Dendritic cell treated with granulocyte-macrophage colony-stimulating factor and Interleukin-4, amounts not matched to agents 40 ng/mL and 50 ng/mL, for 4 days (primary cell): ENCODE measurements at regions of chr6 and their contacts with region 1.

Region 1: GRCh38 chr6:37169496-37170272 is at the start of gene PIM1:
- H3K4me3 Mint-ChIP-seq: peak within 1 kb of the TSS; percentile 84
- H3K27ac Mint-ChIP-seq: peak within 1 kb of the TSS; percentile 94
- H3K4me1 Mint-ChIP-seq: peaks cover 47% of the 10 kb centered on the region
- H3K27me3 Mint-ChIP-seq: peaks cover 6% of the 10 kb centered on the region

Region 2: DNA sequence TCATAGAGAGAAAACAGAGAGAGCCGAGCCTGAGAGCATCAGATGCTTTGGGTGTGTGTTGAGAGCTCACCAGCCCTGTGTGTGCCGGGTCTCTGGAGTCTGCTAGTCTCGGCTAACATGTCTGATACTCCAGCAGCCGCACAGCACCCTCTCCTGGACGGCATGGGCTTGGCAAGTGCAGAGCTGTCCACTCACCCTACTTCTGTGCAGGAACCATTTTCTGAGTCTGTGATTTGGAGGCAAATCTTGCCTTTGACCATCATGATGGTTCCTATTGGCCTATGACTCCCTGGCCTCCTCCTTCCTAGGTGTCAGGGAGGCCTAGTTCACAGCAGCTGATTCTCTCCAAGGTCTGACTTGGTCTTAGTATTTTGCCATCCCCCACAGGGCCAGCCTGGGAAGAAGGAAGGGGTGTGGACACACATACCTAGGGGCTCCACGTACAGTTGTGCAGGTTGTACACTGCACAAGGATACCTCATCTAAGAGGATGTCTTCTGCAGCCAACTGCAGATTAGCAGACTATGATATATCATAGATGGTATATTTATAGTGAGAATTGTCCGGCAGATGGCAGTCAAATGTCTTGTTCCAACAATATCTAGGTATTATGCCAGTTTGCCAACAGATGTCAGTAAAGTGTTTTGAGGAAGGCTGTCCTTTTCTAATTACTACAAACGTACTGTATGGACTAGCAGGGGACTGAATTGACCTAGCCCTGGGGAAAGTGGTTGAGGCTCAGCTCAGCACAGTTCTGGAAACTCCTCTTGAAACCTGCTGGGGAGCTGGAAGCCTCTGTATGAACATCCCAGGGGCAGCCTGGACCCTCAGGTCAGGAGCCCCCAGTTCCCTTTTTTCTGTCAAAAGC is 151.3 kb before region 1 on chr6:
- intact Hi-C with region 1: loop called (anchors 1 kb)
- H3K4me3 Mint-ChIP-seq: no peak overlapping the region
- H3K27ac Mint-ChIP-seq: peak overlapping the region; percentile 1
- H3K4me1 Mint-ChIP-seq: peaks cover 88% of the 10 kb centered on the region
- H3K27me3 Mint-ChIP-seq: no peaks in the 10 kb centered on the region

Region 3: GRCh38 chr6:37051138-37052026 is 118.3 kb before region 1 on chr6:
- intact Hi-C with region 1: loop called (anchors 1 kb)
- H3K4me3 Mint-ChIP-seq: peak overlapping the region; percentile 21
- H3K27ac Mint-ChIP-seq: peak overlapping the region; percentile 85
- H3K4me1 Mint-ChIP-seq: peaks cover 66% of the 10 kb centered on the region
- H3K27me3 Mint-ChIP-seq: peaks cover 20% of the 10 kb centered on the region

Region 4: GRCh38 chr6:37102279-37103168 is 67.2 kb before region 1 on chr6:
- intact Hi-C with region 1: loop called (anchors 2 kb)
- H3K4me3 Mint-ChIP-seq: peak overlapping the region; percentile 73
- H3K27ac Mint-ChIP-seq: peak overlapping the region; percentile 86
- H3K4me1 Mint-ChIP-seq: peaks cover 43% of the 10 kb centered on the region
- H3K27me3 Mint-ChIP-seq: peaks cover 2% of the 10 kb centered on the region

Region 5: GRCh38 chr6:37239950-37240713 is 70.4 kb after region 1 on chr6:
- intact Hi-C with region 1: no loop called
- H3K4me3 Mint-ChIP-seq: no peak overlapping the region
- H3K27ac Mint-ChIP-seq: peak overlapping the region; percentile 74
- H3K4me1 Mint-ChIP-seq: peaks cover 48% of the 10 kb centered on the region
- H3K27me3 Mint-ChIP-seq: no peaks in the 10 kb centered on the region